ENCODE measurements at regions of chr16 and their contacts with region 1.

Region 1: GRCh38 chr16:88785106-88785924 is at the start of gene PIEZO1:
- DNase-seq: peak; percentile 73 to 94 (median 86)
- ATAC-seq: peak; percentile 50
- H3K4me3 ChIP-seq: peak within 1 kb of the TSS; percentile 63
- H3K4me3 Mint-ChIP-seq: peak within 1 kb of the TSS; percentile 89
- H3K27ac ChIP-seq: peak within 1 kb of the TSS; percentile 75 to 77
- H3K27ac Mint-ChIP-seq: peak within 1 kb of the TSS; percentile 55
- H3K4me1 ChIP-seq: peaks cover 57% of the 10 kb centered on the region
- H3K4me1 Mint-ChIP-seq: peaks cover 47% of the 10 kb centered on the region
- H3K27me3 ChIP-seq: no peaks in the 10 kb centered on the region
- H3K27me3 Mint-ChIP-seq: no peaks in the 10 kb centered on the region
- CTCF ChIP-seq: peak; percentile 98
- total RNA-seq, gene PIEZO1: 142 to 146 TPM

Region 2: GRCh38 chr16:88628512-88628974 is 156.8 kb before region 1 on chr16:
- CTCF ChIA-PET with region 1: no interaction called
- POLR2A ChIA-PET with region 1: no interaction called
- intact Hi-C with region 1: no loop called
- DNase-seq: no peak
- ATAC-seq: no peak
- H3K4me3 ChIP-seq: no peak overlapping the region
- H3K4me3 Mint-ChIP-seq: no peak overlapping the region
- H3K27ac ChIP-seq: no peak overlapping the region
- H3K27ac Mint-ChIP-seq: no peak overlapping the region
- H3K4me1 ChIP-seq: peaks cover 13% of the 10 kb centered on the region
- H3K4me1 Mint-ChIP-seq: no peaks in the 10 kb centered on the region
- H3K27me3 ChIP-seq: no peaks in the 10 kb centered on the region
- H3K27me3 Mint-ChIP-seq: no peaks in the 10 kb centered on the region
- CTCF ChIP-seq: peak; percentile 21

Region 3: DNA sequence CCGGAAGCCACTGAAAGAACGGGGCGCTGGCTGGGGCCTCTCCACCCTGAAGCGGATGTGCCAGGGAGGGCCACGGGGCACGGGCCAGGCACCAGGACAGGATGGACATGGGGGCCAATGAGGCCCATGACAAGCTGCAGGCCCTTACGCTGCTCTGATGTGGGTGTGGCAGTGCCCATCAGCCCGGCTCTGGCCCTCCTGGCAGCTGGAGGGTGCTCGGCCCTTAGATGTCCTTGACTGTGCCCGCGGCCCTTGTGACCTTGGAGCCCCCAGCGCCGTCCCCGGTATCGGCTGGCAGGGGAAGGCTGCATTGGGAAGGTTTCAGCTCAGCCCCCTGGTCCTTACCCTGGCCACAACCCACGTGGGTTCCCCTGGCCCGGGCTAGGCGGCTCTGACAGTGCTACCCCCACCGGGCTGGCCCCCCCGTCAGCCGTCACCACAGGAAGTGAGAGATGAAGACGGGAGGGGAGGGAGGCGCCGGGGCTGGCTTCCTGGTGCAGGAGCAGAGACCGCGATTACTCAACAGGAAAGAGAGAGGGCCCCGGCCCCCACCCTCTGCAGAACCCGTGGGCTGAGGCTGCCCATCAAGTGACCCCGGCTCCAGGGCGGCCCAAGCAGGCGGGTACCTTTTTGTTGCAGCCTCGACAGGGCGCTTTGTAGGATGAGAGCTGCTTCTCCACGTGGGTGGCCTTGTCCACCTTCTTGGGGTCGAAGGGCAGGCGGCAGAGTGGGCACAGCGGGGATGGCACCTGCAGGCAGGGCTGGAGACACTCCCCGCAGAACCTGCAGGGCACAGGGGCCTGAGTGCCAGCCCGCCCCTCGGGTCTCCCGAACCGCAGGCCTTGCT is 84.5 kb before region 1 on chr16:
- CTCF ChIA-PET with region 1: interaction called, 3 read pairs
- POLR2A ChIA-PET with region 1: interaction called, 16 read pairs
- intact Hi-C with region 1: no loop called
- DNase-seq: peak; percentile 89 to 98 (median 96)
- ATAC-seq: peak; percentile 73
- H3K4me3 ChIP-seq: peak overlapping the region; percentile 82
- H3K4me3 Mint-ChIP-seq: peak overlapping the region; percentile 99
- H3K27ac ChIP-seq: peak overlapping the region; percentile 93 to 96
- H3K27ac Mint-ChIP-seq: peak overlapping the region; percentile 100
- H3K4me1 ChIP-seq: peaks cover 94% of the 10 kb centered on the region
- H3K4me1 Mint-ChIP-seq: peaks cover 70% of the 10 kb centered on the region
- H3K27me3 ChIP-seq: no peaks in the 10 kb centered on the region
- H3K27me3 Mint-ChIP-seq: no peaks in the 10 kb centered on the region
- CTCF ChIP-seq: no peak

Region 4: DNA sequence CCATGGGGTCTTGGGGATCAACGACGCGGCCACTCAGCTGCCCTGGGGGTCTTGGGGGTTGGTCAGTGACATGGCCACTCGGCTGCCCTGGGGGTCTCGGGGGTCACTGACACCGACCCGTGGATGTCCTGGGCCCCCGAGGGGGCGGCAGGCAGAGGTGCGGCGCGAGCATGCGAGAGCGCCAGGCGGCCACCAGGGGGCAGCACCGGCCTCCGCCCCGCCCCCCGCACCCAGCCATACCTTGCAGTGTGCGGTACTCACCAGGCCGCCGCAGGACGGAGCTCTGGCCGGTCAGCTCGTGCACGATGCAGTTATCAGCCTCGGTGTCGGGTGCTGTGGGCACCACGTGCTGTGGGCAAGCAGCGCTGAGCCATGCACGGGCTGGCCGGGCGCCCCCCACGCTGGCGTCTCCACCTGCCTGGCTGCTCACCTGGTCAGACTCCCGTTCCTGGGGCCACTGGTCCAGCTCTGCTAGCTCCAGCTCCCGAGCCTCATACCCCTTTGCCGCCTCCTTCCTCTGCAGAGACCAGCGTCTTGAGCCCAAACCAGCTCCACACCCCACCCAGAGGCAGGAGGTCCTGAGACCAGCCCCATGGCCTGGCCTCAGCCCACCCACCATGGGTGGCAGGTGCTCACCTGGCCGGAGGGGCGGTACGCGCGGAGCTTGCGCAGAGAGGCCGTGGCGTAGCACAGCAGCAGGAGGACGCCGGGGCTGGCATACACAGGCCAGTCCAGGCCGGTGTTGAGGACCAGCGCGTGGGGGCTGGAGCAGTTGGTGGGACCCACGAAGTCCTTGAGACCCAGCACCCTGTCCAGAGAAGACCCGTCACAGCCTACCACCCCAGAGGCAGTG is 47.8 kb before region 1 on chr16:
- CTCF ChIA-PET with region 1: interaction called, 58 read pairs
- POLR2A ChIA-PET with region 1: interaction called, 11 read pairs
- intact Hi-C with region 1: loop called (anchors 1 kb)
- DNase-seq: peak; percentile 44 to 89 (median 72)
- ATAC-seq: peak; percentile 98
- H3K4me3 ChIP-seq: no peak overlapping the region
- H3K4me3 Mint-ChIP-seq: no peak overlapping the region
- H3K27ac ChIP-seq: no peak overlapping the region
- H3K27ac Mint-ChIP-seq: no peak overlapping the region
- H3K4me1 ChIP-seq: peaks cover 15% of the 10 kb centered on the region
- H3K4me1 Mint-ChIP-seq: no peaks in the 10 kb centered on the region
- H3K27me3 ChIP-seq: no peaks in the 10 kb centered on the region
- H3K27me3 Mint-ChIP-seq: no peaks in the 10 kb centered on the region
- CTCF ChIP-seq: peak; percentile 98

Region 5: DNA sequence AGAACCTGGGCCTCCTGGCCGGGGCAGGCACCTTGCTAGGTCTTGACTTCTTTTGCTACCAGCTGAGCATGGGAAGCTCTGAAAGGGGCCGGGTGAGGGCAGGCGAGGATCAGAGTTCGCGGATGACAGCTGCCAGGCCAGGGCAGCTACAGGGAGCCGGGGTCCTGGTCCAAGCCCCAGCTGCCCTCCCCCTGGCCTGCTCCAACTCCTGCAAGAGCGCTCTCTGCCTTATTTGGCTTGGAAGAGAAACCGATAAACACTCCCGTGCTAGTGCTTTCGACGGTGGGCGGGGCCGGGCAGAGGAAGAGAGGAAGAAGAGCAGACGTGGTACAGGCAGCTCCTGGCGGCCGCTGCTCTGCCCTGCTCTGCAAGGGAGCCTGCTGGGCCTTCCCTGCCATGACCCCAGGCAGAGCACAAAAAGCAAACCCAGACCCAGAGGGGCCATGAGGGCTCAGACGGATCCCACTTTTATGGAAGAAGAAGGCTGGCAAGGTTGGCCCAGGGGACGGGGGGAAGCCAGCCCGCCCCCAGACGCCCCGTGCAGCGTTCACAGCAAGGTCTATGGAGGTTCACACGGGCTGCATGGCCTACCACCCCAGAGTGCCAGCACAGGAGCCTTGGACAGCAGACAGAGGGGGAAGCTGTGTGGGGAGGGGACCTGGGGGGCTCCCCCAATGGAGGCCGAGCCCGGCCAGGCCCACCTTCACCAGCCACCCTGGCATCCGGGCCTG is 25.9 kb before region 1 on chr16:
- CTCF ChIA-PET with region 1: interaction called, 4 read pairs
- POLR2A ChIA-PET with region 1: interaction called, 14 read pairs
- intact Hi-C with region 1: no loop called
- DNase-seq: peak; percentile 28 to 80 (median 60)
- ATAC-seq: peak; percentile 97
- H3K4me3 ChIP-seq: no peak overlapping the region
- H3K4me3 Mint-ChIP-seq: peak overlapping the region; percentile 77
- H3K27ac ChIP-seq: peak overlapping the region; percentile 3 to 46
- H3K27ac Mint-ChIP-seq: peak overlapping the region; percentile 89
- H3K4me1 ChIP-seq: peaks cover 86% of the 10 kb centered on the region
- H3K4me1 Mint-ChIP-seq: peaks cover 13% of the 10 kb centered on the region
- H3K27me3 ChIP-seq: no peaks in the 10 kb centered on the region
- H3K27me3 Mint-ChIP-seq: no peaks in the 10 kb centered on the region
- CTCF ChIP-seq: no peak

Region 6: GRCh38 chr16:88811769-88812512 is 26.6 kb after region 1 on chr16 and contains the start of gene APRT:
- CTCF ChIA-PET with region 1: interaction called, 3 read pairs
- POLR2A ChIA-PET with region 1: interaction called, 39 read pairs
- intact Hi-C with region 1: no loop called
- DNase-seq: peak; percentile 93 to 99 (median 98)
- ATAC-seq: peak; percentile 90
- H3K4me3 ChIP-seq: peak within 1 kb of the TSS; percentile 75
- H3K4me3 Mint-ChIP-seq: peak within 1 kb of the TSS; percentile 99
- H3K27ac ChIP-seq: peak within 1 kb of the TSS; percentile 64 to 70
- H3K27ac Mint-ChIP-seq: peak within 1 kb of the TSS; percentile 95
- H3K4me1 ChIP-seq: peaks cover 29% of the 10 kb centered on the region
- H3K4me1 Mint-ChIP-seq: peaks cover 4% of the 10 kb centered on the region
- H3K27me3 ChIP-seq: no peaks in the 10 kb centered on the region
- H3K27me3 Mint-ChIP-seq: no peaks in the 10 kb centered on the region
- CTCF ChIP-seq: no peak
- total RNA-seq, gene APRT: 153 to 154 TPM

Region 7: DNA sequence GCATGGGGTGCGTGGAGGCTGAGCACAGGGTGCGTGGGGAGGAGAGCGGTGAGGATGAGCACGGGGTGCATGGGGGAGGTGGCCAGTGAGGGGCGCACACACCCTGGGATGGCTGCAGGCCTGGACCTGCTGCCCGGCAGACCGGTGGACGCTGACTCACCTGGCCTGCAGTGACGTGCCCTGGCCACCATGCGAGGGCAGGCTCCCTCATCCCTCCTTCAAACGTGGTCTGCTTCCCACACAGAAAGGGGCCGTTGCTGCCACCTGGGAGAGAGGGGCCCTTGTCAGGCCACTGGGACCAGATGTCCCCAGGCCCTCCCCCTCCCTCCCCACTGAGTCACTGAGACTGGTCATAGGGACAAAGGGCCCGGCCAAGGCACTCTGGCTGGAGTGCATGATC is 46.5 kb after region 1 on chr16:
- CTCF ChIA-PET with region 1: no interaction called
- POLR2A ChIA-PET with region 1: no interaction called
- intact Hi-C with region 1: no loop called
- DNase-seq: no peak
- ATAC-seq: no peak
- H3K4me3 ChIP-seq: no peak overlapping the region
- H3K4me3 Mint-ChIP-seq: no peak overlapping the region
- H3K27ac ChIP-seq: no peak overlapping the region
- H3K27ac Mint-ChIP-seq: no peak overlapping the region
- H3K4me1 ChIP-seq: no peaks in the 10 kb centered on the region
- H3K4me1 Mint-ChIP-seq: no peaks in the 10 kb centered on the region
- H3K27me3 ChIP-seq: no peaks in the 10 kb centered on the region
- H3K27me3 Mint-ChIP-seq: no peaks in the 10 kb centered on the region
- CTCF ChIP-seq: no peak

Region 8: DNA sequence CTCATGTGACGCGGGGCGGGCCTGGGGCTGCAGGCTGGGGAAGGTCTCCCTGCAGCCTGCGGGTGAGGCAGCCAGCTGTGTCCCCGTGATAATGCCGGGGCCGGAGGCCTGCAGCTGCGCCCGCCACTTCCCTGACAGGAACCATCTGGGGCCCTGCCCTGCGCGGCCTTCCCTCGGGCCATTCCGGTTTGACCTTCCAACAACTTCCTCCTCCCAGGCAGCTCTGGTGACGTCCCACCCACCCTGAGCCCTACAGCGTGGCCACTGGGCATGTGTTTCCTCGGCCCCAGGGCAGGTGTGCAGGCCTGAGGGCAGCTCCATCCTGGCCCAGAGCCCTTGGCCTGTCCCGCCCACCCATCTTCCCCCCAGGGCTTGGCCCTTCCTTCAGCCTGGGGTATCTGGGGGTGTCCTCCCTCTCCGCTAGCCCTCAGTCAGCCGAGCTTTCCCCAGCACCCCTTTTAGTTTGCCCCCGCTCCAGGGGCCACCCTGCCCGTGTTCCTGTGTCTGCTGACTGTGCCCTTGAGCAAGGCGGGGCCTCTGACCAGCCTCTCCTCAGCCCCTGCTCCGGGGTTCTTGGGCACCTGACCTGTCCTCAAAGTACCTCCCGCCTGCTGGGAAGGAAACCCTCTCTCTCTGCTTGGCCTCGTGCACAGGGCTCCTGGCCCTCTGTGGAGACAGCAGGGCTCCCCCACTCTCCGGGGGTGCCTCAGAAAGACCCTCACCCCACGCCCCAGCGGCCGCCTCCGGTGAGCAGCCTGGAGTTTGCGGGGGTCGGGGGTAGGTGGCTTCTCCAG is 191.9 kb after region 1 on chr16 and contains the start of gene CBFA2T3:
- CTCF ChIA-PET with region 1: no interaction called
- POLR2A ChIA-PET with region 1: no interaction called
- intact Hi-C with region 1: no loop called
- DNase-seq: peak in 3 of 14 experiments; percentile 19 to 53 (median 49)
- ATAC-seq: no peak
- H3K4me3 ChIP-seq: peak within 1 kb of the TSS; percentile 34
- H3K4me3 Mint-ChIP-seq: no peak within 1 kb of the TSS
- H3K27ac ChIP-seq: no peak within 1 kb of the TSS
- H3K27ac Mint-ChIP-seq: no peak within 1 kb of the TSS
- H3K4me1 ChIP-seq: peaks cover 11% of the 10 kb centered on the region
- H3K4me1 Mint-ChIP-seq: no peaks in the 10 kb centered on the region
- H3K27me3 ChIP-seq: peaks cover 36 to 41% of the 10 kb centered on the region in 2 experiments
- H3K27me3 Mint-ChIP-seq: peaks cover 27% of the 10 kb centered on the region
- CTCF ChIP-seq: no peak
- total RNA-seq, gene CBFA2T3: 0.80 to 1.6 TPM